ENCODE measurements at regions of chr19 and their contacts with region 1.

Region 1: DNA sequence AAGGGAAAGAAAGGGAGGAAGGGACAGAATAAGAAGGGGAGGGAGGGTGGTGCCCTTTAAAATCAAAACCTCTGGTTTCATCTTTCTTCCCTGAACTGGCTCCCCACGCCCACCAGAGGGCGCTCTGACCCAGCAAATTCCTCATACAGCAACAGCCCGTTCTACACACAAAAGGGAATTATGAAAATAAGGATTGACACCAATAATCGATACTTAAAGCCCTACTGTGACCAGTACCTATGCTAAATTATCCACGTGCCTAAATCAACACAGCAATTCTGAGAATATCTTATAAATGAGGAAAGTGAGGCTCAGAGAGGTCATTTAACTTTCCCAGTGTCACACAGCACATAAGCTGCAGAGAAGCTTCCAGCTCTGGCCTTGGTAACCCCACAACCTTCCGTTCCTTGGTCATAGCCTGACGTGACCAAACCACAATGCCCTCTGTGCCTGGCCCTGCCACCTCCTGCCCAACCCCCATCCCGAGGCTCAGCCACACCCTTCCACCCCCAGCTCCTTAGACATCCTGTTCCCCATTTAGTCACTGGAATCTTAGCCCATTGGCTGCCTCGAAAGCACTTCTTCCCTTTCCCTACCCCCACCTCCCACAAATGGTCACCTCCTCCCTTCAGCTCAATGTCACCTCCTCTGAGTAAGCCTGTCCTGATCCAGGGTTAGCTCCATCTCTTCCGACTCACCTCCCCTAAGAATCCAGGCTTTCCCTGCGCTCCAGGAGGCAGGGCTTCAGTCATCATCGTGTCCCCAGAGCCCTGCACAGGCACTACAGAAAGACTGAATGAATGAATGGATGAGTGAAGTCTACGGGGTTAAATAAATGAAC is 34.2 kb upstream of the PNMA8B start:
- DNase-seq: peak; percentile 71 to 84
- H3K4me3 ChIP-seq: no peak overlapping the region
- H3K4me1 ChIP-seq: no peaks in the 10 kb centered on the region
- H3K27me3 ChIP-seq: no peaks in the 10 kb centered on the region

Region 2: DNA sequence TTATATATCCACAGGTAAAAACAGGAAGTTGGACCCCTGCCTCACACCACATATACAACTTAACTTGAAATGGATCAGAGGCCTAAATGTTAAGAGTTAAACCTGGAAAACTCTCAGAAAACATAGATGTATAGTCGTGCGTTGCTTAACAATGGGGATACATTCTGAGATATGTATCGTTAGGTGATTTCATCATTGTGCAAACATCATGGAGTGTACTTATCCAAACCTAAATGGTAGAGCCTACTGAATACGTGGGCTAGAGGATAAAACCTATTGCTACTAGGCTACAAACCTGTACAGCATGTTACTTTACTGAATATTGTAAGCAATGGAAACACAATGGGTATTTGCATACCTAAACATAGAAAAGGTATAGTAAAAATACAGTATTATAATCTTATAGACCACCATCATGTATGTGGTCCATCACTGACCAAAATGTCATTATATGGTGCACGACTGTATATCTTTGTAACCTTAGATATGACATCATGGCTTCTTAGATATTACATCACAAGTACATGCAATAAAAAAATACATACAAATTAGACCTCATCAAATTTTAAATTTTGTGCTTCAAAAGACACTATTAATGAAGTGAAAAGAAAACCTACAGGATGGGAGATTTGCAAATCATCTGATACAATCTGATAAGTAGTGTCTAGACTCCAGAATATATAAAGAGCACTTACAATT is 56.6 kb after region 1 on chr19:
- in situ Hi-C with region 1: no loop called
- DNase-seq: no peak
- H3K4me3 ChIP-seq: no peak overlapping the region
- H3K4me1 ChIP-seq: no peaks in the 10 kb centered on the region
- H3K27me3 ChIP-seq: no peaks in the 10 kb centered on the region

Region 3: GRCh38 chr19:46661020-46661731 is 131.3 kb after region 1 on chr19 and contains the start of gene DACT3:
- in situ Hi-C with region 1: loop called (anchors 10 kb)
- DNase-seq: peak; percentile 99 to 100
- H3K4me3 ChIP-seq: peak within 1 kb of the TSS; percentile 44
- H3K4me1 ChIP-seq: peaks cover 16% of the 10 kb centered on the region
- H3K27me3 ChIP-seq: no peaks in the 10 kb centered on the region

Region 4: GRCh38 chr19:46803555-46803954 is 273.7 kb after region 1 on chr19:
- in situ Hi-C with region 1: no loop called
- DNase-seq: no peak
- H3K4me3 ChIP-seq: no peak overlapping the region
- H3K4me1 ChIP-seq: no peaks in the 10 kb centered on the region
- H3K27me3 ChIP-seq: no peaks in the 10 kb centered on the region

Region 5: GRCh38 chr19:46840136-46840942 is 310.5 kb after region 1 on chr19:
- in situ Hi-C with region 1: loop called (anchors 10 kb)
- DNase-seq: peak; percentile 56 to 71
- H3K4me3 ChIP-seq: no peak overlapping the region
- H3K4me1 ChIP-seq: no peaks in the 10 kb centered on the region
- H3K27me3 ChIP-seq: no peaks in the 10 kb centered on the region

Measured in HAP-1 (cell line).